ENCODE measurements at regions of chr5 and their contacts with region 1.

Region 1: DNA sequence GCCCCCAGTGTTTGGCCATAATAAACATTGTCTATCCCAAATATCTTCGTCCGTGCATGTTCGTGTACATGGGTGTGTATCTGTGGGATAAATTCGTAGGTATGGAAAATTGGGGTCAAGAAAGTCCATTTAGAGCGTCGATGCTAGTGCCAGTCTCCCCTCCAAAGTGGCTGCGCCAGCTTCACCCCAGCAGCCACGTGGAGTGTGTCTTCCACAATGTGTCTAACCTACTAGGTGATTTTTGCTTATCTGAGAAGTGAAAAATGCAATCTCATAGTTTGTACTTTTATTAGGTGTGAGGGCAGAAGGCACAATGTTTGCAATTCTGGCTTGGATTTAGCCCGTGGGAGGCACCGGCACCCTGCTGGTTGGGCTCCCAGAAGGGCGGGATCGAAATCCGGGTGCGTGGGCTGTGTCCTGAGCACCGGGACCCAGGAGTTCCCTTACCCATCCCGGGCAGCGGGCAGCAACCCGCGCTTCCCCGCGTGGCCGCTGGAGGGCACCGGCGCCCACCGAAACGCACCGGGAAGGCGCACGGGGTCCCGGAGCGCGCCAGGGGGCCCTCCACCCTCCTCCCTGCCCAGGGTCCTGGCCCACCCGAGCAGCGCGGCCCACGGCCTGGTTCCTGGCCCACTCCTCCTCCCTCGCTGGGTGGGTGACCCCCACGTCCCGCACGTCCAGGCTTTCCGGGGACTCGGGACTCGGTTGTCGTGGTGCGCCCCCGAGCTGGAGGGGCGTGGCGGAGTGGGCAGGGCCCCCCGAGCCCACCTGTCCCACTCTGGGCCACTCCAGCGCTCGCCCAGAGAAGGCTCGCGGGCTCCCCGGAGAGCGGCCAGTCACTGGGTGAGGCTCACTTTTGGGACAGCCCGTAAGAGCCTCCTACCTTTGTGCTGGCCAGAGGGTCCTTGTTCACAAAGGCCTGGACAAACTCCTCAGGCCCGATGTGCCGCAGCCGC is 55.4 kb upstream of the RNF130 start:
- H3K4me3 ChIP-seq: no peak overlapping the region
- H3K27ac ChIP-seq: no peak overlapping the region
- H3K4me1 ChIP-seq: no peaks in the 10 kb centered on the region
- CTCF ChIP-seq: peak; percentile 87

Region 2: DNA sequence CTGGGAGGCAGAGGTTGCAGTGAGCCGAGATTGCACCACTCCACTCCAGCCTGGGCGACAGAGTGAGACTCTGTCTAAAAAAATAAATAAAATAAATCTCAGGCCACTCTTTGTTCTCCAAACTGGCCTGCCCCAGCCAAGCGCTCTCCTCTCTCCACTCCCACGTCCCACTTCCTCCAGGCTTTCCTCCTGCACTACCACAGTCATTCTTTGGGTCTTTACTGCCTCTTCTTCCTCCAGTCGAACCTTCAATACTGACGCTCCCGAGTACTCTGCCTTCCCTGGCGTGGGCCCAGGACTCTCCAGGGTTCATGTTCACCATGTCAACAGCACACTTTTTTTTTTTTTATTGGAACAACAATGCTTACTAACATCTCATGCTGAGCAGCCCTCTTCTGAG is 79.3 kb before region 1 on chr5:
- CTCF ChIA-PET with region 1: no interaction called
- POLR2A ChIA-PET with region 1: no interaction called
- H3K4me3 ChIP-seq: no peak overlapping the region
- H3K27ac ChIP-seq: no peak overlapping the region
- H3K4me1 ChIP-seq: peaks cover 9% of the 10 kb centered on the region
- CTCF ChIP-seq: no peak

Region 3: DNA sequence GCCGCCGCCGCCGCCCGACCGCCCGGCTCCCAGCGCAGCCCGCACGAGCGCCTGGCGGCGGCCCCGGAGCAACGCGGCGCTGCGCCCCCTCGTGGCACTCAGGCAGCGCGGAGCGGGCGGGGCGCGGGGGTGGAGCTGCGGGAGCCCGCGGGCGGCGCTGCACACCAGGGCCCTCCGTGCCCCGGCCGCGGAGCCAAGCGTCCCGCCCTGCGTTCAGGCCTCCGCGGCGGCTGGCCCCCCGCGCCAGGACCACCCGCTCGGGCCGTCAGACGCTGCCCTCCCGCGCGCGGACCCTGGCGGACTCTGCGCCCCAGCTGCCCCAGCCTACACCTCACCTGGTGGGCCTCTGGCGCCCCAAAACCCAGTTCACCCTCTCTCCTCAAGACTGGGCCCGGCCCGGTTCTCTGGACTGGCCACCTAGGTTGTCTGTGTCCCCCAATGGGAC is 82.2 kb after region 1 on chr5 and contains the start of gene RASGEF1C:
- CTCF ChIA-PET with region 1: interaction called, 10 read pairs
- POLR2A ChIA-PET with region 1: no interaction called
- H3K4me3 ChIP-seq: peak within 1 kb of the TSS; percentile 47
- H3K27ac ChIP-seq: peak within 1 kb of the TSS; percentile 9; the same call in 1 of the 2 replicates
- H3K4me1 ChIP-seq: no peaks in the 10 kb centered on the region; the same call in 1 of the 2 replicates
- CTCF ChIP-seq: no peak